ENCODE measurements at regions of chr20 and their contacts with region 1.

Region 1: DNA sequence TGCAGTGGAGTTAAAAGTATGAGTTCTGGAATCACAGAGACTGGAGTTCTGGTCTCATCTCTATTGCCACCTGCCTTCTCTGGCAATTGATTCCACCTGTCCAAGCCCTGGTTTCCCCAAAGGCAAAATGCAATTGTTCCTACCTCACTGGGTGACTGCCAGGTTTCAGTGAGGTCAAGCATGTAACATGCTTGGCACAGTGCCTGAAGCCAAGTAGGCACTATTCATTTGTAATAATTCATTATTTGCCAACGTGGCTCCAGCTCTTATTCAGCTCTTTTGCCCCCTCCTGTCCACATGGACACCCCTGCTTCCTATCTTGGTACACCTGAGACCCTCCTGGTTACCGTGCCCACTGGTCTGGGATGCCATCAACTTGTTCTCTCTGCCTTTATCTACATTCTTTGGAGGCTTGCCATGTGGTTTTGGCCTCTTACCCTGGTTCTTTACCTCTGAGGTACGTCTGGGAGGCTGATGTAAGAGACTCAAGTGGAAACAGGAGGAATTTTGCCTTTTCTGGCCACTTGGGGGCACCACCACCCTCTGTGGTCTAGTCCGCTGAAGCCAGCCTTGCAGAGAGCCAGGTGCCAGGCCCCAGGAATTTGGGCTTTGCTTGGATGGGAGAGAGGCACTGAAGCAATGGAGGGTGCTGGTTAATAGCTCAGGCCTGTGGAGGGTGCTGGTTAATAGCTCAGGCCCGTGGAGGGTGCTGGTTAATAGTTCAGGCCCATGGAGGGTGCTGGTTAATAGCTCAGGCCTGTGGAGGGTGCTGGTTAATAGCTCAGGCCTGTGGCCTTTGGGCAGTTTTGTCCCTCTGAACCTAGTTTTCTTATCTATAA is 1.7 kb downstream of the KCNK15 start:
- DNase-seq: peak; percentile 13
- H3K4me3 ChIP-seq: no peak overlapping the region
- H3K27ac ChIP-seq: no peak overlapping the region
- H3K27me3 ChIP-seq: peaks cover 65% of the 10 kb centered on the region
- CTCF ChIP-seq: peak; percentile 73

Region 2: GRCh38 chr20:44388466-44389023 is 358.8 kb before region 1 on chr20:
- CTCF ChIA-PET with region 1: no interaction called
- POLR2A ChIA-PET with region 1: interaction called, 11 read pairs
- DNase-seq: peak; percentile 21
- H3K4me3 ChIP-seq: no peak overlapping the region
- H3K27ac ChIP-seq: no peak overlapping the region
- H3K27me3 ChIP-seq: peaks cover 19% of the 10 kb centered on the region
- CTCF ChIP-seq: peak; percentile 81

Region 3: GRCh38 chr20:44683263-44684046 is 63.9 kb before region 1 on chr20:
- CTCF ChIA-PET with region 1: interaction called, 11 read pairs
- POLR2A ChIA-PET with region 1: no interaction called
- DNase-seq: no peak
- H3K4me3 ChIP-seq: no peak overlapping the region
- H3K27ac ChIP-seq: no peak overlapping the region
- H3K27me3 ChIP-seq: peaks cover 8% of the 10 kb centered on the region
- CTCF ChIP-seq: peak; percentile 74

Region 4: GRCh38 chr20:44733341-44734069 is 13.9 kb before region 1 on chr20:
- CTCF ChIA-PET with region 1: interaction called, 15 read pairs
- POLR2A ChIA-PET with region 1: no interaction called
- DNase-seq: no peak
- H3K4me3 ChIP-seq: no peak overlapping the region
- H3K27ac ChIP-seq: no peak overlapping the region
- H3K27me3 ChIP-seq: no peaks in the 10 kb centered on the region
- CTCF ChIP-seq: peak; percentile 97

Region 5: GRCh38 chr20:44861531-44862006 is 114.2 kb after region 1 on chr20:
- CTCF ChIA-PET with region 1: interaction called, 86 read pairs
- POLR2A ChIA-PET with region 1: no interaction called
- DNase-seq: no peak
- H3K4me3 ChIP-seq: no peak overlapping the region
- H3K27ac ChIP-seq: no peak overlapping the region
- H3K27me3 ChIP-seq: peaks cover 12% of the 10 kb centered on the region
- CTCF ChIP-seq: no peak

Region 6: DNA sequence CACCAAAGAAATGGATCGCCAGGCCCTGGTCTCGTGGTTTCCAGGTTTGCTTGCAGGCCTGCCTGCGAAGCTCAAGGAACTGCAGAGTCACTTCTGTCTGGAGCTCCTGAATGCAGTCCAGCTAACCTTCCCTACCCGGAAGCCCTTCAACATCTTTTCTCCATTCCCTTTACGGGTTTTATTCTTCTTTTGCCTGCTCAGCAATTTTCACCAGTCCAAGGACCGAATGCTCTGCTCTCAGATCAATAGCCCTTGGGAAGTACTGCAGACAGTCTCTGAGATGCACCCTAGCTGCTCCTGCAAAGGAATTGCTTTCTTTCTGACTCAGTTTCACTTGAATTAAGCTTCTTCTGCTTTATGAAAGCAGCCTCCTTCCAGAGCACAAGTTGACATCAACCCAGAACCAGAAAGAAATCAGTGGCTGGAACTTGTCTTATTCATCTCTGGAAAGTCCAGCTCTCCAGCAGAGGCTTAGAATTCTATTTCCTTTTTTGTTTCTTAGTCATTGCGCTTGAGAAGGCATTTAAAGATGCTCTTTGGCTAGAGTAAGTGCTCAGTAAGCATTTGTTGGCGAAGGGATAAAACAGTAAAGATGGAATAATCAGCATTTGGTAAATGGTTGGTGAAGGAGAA is 119.4 kb after region 1 on chr20:
- CTCF ChIA-PET with region 1: interaction called, 86 read pairs
- POLR2A ChIA-PET with region 1: no interaction called
- DNase-seq: no peak
- H3K4me3 ChIP-seq: no peak overlapping the region
- H3K27ac ChIP-seq: no peak overlapping the region
- H3K27me3 ChIP-seq: peaks cover 26% of the 10 kb centered on the region
- CTCF ChIP-seq: no peak

Measured in AG04450 (cell line).